H1 (cell line): ENCODE measurements at regions of chr20 and their contacts with region 1.

Region 1: GRCh38 chr20:38730989-38731737 is 6.9 kb downstream of the SLC32A1 start:
- DNase-seq: peak in 1 of 2 experiments; percentile 99
- H3K4me3 ChIP-seq: peak overlapping the region; percentile 18 to 59 (median 36); a peak in 7 of 8 replicates
- H3K27ac ChIP-seq: no peak overlapping the region
- H3K4me1 ChIP-seq: peaks cover 0 to 46% (median 30%) of the 10 kb centered on the region in 4 experiments; a peak in 6 of 7 replicates
- H3K27me3 ChIP-seq: peaks cover 44 to 68% (median 62%) of the 10 kb centered on the region in 4 experiments
- CTCF ChIP-seq: peak; percentile 90 to 99 (median 98)
- EP300 ChIP-seq: peak in 1 of 2 experiments; percentile 40; a peak in 1 of 3 replicates
- POLR2A ChIP-seq: no peak
- RAD21 ChIP-seq: peak; percentile 51 to 61

Region 2: DNA sequence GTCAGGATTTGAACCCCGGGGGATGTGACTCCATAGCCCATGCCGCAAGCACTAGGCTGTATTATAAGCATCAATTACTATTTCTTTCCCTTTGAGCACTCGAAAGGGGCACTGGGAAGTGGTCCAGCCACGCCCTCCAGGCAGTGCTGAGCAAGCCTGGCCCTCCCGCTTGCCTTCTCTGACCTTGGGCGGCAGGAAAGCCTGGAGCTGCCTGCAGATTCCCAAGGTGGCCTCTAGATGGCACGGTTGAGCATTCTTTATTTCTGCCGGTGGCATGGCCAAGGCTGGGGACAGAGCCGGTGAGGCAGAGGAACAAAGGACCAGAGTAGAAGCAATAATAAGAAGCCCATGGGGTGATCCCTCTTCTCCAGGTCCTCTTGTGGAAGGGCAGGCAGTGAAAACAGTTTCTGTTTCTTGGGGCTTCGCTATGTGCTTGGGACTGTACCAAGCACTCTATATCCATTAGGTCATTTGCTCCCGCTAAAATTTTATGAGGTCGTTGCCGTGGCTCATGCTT is 97.5 kb before region 1 on chr20:
- CTCF ChIA-PET with region 1: interaction called, 25 read pairs
- POLR2A ChIA-PET with region 1: interaction called, 3 read pairs
- DNase-seq: peak; percentile 51 to 91
- H3K4me3 ChIP-seq: no peak overlapping the region
- H3K27ac ChIP-seq: no peak overlapping the region
- H3K4me1 ChIP-seq: peaks cover 0 to 6% (median 2%) of the 10 kb centered on the region in 4 experiments; a peak in 3 of 7 replicates
- H3K27me3 ChIP-seq: peaks cover 0 to 2% (median 0%) of the 10 kb centered on the region in 4 experiments; a peak in 1 of 7 replicates
- CTCF ChIP-seq: peak; percentile 75 to 97 (median 86)
- EP300 ChIP-seq: no peak
- POLR2A ChIP-seq: no peak
- RAD21 ChIP-seq: peak; percentile 54 to 74

Region 3: GRCh38 chr20:38658879-38659596 is 72.1 kb before region 1 on chr20:
- CTCF ChIA-PET with region 1: interaction called, 88 read pairs
- POLR2A ChIA-PET with region 1: interaction called, 3 read pairs
- DNase-seq: peak in 1 of 2 experiments; percentile 78
- H3K4me3 ChIP-seq: no peak overlapping the region
- H3K27ac ChIP-seq: no peak overlapping the region
- H3K4me1 ChIP-seq: peaks cover 0 to 7% (median 2%) of the 10 kb centered on the region in 4 experiments; a peak in 3 of 7 replicates
- H3K27me3 ChIP-seq: peaks cover 0 to 2% (median 0%) of the 10 kb centered on the region in 4 experiments; a peak in 4 of 7 replicates
- CTCF ChIP-seq: peak; percentile 79 to 90 (median 88)
- EP300 ChIP-seq: no peak
- POLR2A ChIP-seq: no peak
- RAD21 ChIP-seq: peak; percentile 72 to 82

Region 4: GRCh38 chr20:38692436-38693411 is 38.4 kb before region 1 on chr20:
- CTCF ChIA-PET with region 1: interaction called, 17 read pairs
- POLR2A ChIA-PET with region 1: no interaction called
- DNase-seq: peak in 1 of 2 experiments; percentile 90
- H3K4me3 ChIP-seq: no peak overlapping the region
- H3K27ac ChIP-seq: no peak overlapping the region
- H3K4me1 ChIP-seq: peaks cover 0 to 3% (median 1%) of the 10 kb centered on the region in 4 experiments; a peak in 3 of 7 replicates
- H3K27me3 ChIP-seq: peaks cover 0 to 7% (median 0%) of the 10 kb centered on the region in 4 experiments; a peak in 3 of 7 replicates
- CTCF ChIP-seq: no peak
- EP300 ChIP-seq: no peak
- POLR2A ChIP-seq: no peak
- RAD21 ChIP-seq: 0 out of 4 replicates have a peak, but pooled peaks of 1 of the 2 experiments have one; percentile 9

Region 5: GRCh38 chr20:38748097-38748860 is 17.1 kb after region 1 on chr20 and contains the start of gene ACTR5:
- CTCF ChIA-PET with region 1: interaction called, 223 read pairs
- POLR2A ChIA-PET with region 1: interaction called, 11 read pairs
- DNase-seq: peak in 1 of 2 experiments; percentile 99
- H3K4me3 ChIP-seq: peak within 1 kb of the TSS; percentile 62 to 90 (median 88)
- H3K27ac ChIP-seq: peak within 1 kb of the TSS; percentile 80; the same call in 1 of the 2 replicates
- H3K4me1 ChIP-seq: peaks cover 3 to 7% (median 6%) of the 10 kb centered on the region in 4 experiments; a peak in 4 of 7 replicates
- H3K27me3 ChIP-seq: peaks cover 2 to 12% (median 11%) of the 10 kb centered on the region in 4 experiments
- CTCF ChIP-seq: 0 out of 4 replicates have a peak, but pooled peaks of 1 of the 3 experiments have one; percentile 7
- EP300 ChIP-seq: no peak
- POLR2A ChIP-seq: peak in 1 of 2 experiments; percentile 78; a peak in 2 of 3 replicates
- RAD21 ChIP-seq: no peak
- total RNA-seq, gene ACTR5: 14.1 and 14.4 TPM in 2 replicates

Region 6: GRCh38 chr20:38893565-38894090 is 162.5 kb after region 1 on chr20:
- CTCF ChIA-PET with region 1: interaction called, 29 read pairs
- POLR2A ChIA-PET with region 1: no interaction called
- DNase-seq: peak; percentile 41 to 89
- H3K4me3 ChIP-seq: peak overlapping the region in 1 of 4 experiments; percentile 41; a peak in 2 of 8 replicates
- H3K27ac ChIP-seq: no peak overlapping the region
- H3K4me1 ChIP-seq: peaks cover 3 to 10% (median 4%) of the 10 kb centered on the region in 4 experiments; a peak in 4 of 7 replicates
- H3K27me3 ChIP-seq: no peaks in the 10 kb centered on the region; a peak in 1 of 7 replicates
- CTCF ChIP-seq: peak; percentile 88 to 99 (median 98)
- EP300 ChIP-seq: no peak
- POLR2A ChIP-seq: no peak
- RAD21 ChIP-seq: peak; percentile 89 to 90